Colonic mucosa (tissue), 4 donors: ENCODE measurements at regions of chr5 and their contacts with region 1.

Region 1: GRCh38 chr5:123344816-123345426 is 78.3 kb downstream of the CEP120 start:
- DNase-seq: no peak
- H3K4me3 ChIP-seq: no peak overlapping the region
- H3K27ac ChIP-seq: no peak overlapping the region
- H3K4me1 ChIP-seq: no peaks in the 10 kb centered on the region
- H3K27me3 ChIP-seq: no peaks in the 10 kb centered on the region
- CTCF ChIP-seq: peak; percentile 50

Region 2: DNA sequence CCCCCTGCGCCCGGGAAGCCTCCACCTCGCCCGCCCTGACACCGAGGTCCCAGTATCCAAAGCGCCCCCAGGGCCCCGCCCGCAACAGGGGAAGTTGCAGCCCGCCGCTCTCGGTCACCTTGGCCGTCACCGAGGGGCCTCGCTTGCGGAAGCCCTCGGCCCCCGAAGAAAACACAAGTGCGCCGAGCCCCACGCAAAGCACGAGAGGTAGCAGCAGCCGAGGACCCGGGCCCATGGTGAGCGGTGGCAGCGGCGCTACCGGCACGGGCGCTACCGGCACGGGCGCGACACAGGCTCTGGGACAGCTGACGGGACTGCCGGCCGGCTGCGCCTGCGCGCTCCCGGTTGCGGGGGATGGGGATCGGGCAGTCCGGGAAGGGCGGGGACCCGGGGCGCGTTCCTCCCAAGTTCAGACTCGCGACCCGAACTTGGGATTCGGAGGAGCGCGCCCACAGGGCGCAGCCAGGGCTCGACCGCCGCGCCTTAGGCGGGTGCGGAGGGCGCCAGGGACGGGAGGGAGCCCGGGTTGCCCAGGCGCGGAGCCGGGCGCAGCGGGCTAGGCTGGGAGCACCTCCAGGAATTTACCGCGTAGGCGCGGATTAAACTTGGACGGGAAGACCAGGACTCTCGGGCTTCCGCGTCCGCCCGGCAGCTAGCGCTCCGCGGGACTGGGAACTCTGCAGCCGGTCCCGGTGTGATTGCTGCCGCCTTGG is 308.4 kb before region 1 on chr5 and contains the start of gene PPIC:
- intact Hi-C with region 1: loop called (anchors 10 kb)
- DNase-seq: peak; percentile 93
- H3K4me3 ChIP-seq: peak within 1 kb of the TSS; percentile 72
- H3K27ac ChIP-seq: peak within 1 kb of the TSS; percentile 97
- H3K4me1 ChIP-seq: no peaks in the 10 kb centered on the region
- H3K27me3 ChIP-seq: no peaks in the 10 kb centered on the region
- CTCF ChIP-seq: no peak
- total RNA-seq, gene PPIC: 33.7 to 84.8 TPM

Region 3: DNA sequence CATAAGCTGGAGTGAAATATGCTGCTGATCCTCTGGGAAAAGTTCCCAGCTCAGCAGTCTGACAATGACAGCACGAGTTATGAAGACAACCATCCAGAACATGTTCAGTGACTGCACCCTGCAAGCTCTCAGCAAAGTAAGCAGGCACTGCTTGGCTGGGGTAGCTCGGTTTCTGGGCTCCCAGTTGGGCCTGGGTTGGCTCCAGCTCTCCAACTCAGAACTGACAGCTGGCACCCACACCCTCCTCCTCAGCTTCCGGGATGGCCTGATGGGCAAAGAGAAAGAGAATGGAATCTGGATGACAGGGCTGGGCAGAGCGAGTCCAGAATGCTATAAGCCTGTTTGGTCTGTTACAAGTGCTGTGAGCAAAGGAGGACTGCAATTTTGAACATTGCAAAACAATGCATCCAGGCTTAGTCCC is 352.0 kb after region 1 on chr5:
- intact Hi-C with region 1: no loop called
- DNase-seq: no peak
- H3K4me3 ChIP-seq: no peak overlapping the region
- H3K27ac ChIP-seq: peak overlapping the region; percentile 12
- H3K4me1 ChIP-seq: no peaks in the 10 kb centered on the region
- H3K27me3 ChIP-seq: no peaks in the 10 kb centered on the region
- CTCF ChIP-seq: no peak